ENCODE measurements at regions of chr16 and their contacts with region 1.

Region 1: DNA sequence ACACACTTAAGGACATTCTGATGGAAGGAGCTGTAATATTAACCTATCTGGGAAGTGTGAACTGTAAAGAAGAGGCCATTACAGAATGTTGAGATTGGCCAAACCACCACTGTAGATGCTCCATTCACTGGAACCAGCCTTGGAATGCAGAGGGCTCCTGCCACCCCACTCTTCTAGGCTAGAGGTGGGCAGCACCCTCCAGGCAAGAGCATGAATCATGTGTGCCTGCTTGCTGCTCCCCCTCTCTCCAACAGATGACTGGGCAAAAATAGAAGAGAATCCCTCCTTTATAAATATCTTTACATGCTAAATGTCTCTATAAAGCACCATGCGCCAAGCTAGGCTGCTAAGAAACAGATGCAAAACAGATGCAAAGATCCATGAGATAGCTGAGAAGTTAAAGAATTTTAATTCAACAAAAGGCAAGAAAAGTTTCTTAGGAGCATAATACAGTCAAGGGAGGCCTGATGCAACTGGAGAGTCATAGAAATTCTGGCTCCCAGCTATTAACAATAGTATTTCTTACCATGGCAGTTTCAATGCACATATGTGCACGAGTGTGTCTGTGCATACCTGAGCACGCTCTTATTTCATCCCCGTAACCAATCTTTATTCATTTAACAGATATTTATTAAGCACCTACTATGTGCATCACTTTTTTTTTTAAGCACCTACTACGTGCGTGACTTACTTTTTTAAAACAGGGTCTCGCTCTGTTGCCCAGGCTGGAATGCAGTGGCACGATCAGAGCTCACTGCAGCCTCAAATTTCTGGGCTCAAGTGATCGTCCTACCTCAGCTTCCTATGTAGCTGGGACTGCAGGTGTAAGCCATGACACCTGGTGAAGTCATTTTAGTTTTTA is 53.6 kb downstream of the GRIN2A start:
- DNase-seq: no peak
- H3K4me3 ChIP-seq: no peak overlapping the region
- H3K27me3 ChIP-seq: no peaks in the 10 kb centered on the region
- CTCF ChIP-seq: no peak

Region 2: DNA sequence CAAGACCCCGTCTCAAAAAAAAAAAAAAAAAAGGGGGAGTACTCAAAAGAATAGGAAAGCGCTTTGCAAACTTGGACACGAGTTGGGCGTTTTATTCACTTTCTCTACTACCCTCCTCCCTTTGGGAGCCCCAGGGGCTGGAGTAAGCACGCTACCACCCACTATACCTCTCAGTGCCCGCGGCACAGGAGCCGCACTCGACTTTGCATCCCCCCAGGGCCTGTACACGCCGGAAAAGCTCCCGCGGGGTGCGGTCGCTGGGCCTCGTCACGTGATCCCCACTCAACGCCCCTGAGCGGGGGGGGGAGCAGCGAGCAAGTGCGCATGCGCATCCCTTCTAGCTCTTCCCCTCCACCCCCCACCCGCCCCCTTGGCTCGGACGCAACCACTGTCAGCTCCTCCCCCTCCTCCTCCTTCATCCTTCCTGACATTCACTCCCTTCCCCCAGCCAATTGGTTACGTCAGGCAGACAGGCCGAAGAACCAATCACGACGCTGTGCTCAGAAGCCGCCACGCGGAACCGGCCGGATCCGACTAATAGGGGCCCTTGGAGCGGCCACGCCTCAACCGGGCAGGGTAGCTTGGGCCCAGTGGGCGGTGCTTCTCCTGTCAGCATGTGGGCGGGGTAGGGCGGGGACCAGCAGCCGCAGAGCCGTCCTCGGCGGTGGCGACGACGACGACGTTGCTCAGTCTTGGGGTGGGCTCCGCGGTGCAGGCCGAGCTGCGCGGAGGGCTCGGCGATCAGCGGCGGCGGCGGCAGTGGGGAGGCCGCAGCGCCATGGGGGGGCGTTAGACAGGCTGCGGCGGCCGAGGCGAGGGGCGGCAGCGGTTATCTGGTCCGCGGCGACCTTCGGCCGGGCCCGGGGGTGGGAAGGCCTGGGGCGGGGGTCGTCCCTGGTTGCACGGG is 1037.4 kb before region 1 on chr16 and contains the start of gene HAPSTR1:
- CTCF ChIA-PET with region 1: no interaction called
- POLR2A ChIA-PET with region 1: interaction called, 24 read pairs
- DNase-seq: peak; percentile 98
- H3K4me3 ChIP-seq: peak within 1 kb of the TSS; percentile 88
- H3K27me3 ChIP-seq: no peaks in the 10 kb centered on the region
- CTCF ChIP-seq: no peak
- polyA plus RNA-seq, gene HAPSTR1: 11.9 and 22.9 TPM in 2 replicates

Measured in BJ (cell line).